ENCODE measurements at regions of chr19 and their contacts with region 1.

Region 1: DNA sequence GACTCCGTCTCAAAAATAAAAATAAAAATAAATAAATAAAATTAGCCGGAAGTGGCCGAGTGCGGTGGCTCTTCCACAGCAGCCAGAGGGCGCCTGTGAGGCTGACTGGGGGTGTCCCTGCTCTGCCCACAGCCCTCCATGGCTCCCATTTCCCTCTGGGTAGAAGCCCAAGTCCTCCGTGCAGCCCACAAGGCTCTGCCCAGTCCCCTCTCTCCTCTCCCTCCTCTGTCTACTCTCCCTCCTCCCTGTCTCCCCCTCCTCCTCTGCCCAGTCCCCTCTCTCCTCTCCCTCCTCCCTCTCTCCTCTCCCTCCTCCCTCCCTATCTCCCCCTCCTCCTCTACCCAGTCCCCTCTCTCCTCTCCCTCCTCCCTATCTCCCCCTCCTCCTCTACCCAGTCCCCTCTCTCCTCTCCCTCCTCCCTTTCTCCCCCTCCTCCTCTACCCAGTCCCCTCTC is 20.4 kb downstream of the MISP start:
- DNase-seq: peak; percentile 73
- ATAC-seq: peak; percentile 76
- H3K4me3 Mint-ChIP-seq: no peak overlapping the region
- H3K27ac Mint-ChIP-seq: no peak overlapping the region
- H3K4me1 Mint-ChIP-seq: peaks cover 2% of the 10 kb centered on the region
- H3K27me3 Mint-ChIP-seq: no peaks in the 10 kb centered on the region

Region 2: DNA sequence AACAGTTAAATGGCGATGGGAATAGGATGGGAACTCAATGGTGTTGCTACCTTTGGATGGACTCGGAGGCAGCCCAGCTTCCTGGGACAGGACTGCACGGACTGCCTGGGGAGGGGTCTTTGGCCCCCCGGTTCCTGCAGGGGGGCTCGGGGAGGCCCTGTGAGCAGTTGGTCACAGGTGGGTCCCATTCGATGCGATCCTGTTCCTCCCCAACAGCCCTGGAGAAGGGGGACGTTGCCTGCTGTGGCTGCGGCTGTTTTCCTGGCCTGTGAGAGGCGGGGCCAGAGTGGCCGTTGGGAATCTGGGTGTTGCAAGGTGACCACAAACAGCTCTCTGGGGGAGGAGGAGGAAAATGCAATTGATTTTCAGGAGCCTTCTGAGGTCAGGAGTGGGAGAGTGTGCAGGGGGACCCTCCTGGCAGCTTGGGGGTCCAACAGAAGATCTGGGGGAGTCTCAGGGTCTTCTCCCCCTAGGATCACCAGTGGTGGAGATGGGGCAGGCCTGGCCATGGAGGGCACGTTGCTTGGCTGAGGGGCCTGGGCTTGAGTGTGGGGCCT is 52.3 kb after region 1 on chr19:
- CTCF ChIA-PET with region 1: no interaction called
- POLR2A ChIA-PET with region 1: no interaction called
- intact Hi-C with region 1: no loop called
- DNase-seq: no peak
- ATAC-seq: no peak
- H3K4me3 Mint-ChIP-seq: no peak overlapping the region
- H3K27ac Mint-ChIP-seq: no peak overlapping the region
- H3K4me1 Mint-ChIP-seq: no peaks in the 10 kb centered on the region
- H3K27me3 Mint-ChIP-seq: peaks cover 13% of the 10 kb centered on the region

Region 3: GRCh38 chr19:843180-843835 is 71.9 kb after region 1 on chr19:
- CTCF ChIA-PET with region 1: no interaction called
- POLR2A ChIA-PET with region 1: no interaction called
- intact Hi-C with region 1: loop called in 1 of 2 experiments (anchors 5 kb)
- DNase-seq: no peak
- ATAC-seq: no peak
- H3K4me3 Mint-ChIP-seq: no peak overlapping the region
- H3K27ac Mint-ChIP-seq: no peak overlapping the region
- H3K4me1 Mint-ChIP-seq: peaks cover 3% of the 10 kb centered on the region
- H3K27me3 Mint-ChIP-seq: peaks cover 25% of the 10 kb centered on the region

Region 4: DNA sequence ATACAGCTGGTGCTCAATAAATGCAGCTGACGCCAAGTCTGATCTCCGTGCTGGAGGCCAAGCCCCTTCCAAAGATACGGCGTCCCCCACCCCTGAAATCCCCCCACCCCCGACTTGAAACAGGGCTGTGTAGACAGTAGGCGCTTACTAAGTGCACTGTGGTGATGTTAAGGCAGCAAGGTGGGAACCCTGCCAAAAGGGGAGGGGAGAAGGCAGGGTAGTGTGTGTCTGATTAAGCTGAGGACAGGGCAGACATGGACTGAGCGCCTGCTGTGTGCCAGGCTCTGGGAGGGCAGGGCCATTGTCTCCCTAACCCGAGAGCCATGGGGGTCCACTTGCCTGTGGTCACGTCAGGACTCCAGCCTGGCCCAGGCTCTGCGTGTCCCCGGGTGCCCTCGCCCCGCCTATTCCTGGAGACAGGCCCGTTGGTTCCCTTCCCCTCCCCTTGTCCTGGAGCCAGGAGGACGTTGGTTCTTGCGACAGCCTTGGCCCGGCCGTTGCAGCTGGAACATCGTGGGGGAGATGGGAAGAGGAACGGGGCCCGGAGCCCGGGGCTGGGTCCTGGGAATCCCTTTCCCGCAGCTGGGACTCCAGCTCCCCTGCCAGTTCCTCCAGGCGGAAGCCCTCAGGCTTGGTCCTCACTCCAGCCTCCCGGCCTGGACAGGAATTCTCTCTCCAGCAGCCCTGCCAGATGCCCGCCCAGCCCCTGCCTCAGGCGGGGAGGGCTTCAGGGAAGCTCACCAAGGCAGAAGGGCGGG is 79.0 kb after region 1 on chr19:
- CTCF ChIA-PET with region 1: no interaction called
- POLR2A ChIA-PET with region 1: no interaction called
- intact Hi-C with region 1: loop called in 1 of 2 experiments (anchors 10 kb)
- DNase-seq: peak; percentile 53
- ATAC-seq: no peak
- H3K4me3 Mint-ChIP-seq: no peak overlapping the region
- H3K27ac Mint-ChIP-seq: no peak overlapping the region
- H3K4me1 Mint-ChIP-seq: no peaks in the 10 kb centered on the region
- H3K27me3 Mint-ChIP-seq: peaks cover 24% of the 10 kb centered on the region

Region 5: DNA sequence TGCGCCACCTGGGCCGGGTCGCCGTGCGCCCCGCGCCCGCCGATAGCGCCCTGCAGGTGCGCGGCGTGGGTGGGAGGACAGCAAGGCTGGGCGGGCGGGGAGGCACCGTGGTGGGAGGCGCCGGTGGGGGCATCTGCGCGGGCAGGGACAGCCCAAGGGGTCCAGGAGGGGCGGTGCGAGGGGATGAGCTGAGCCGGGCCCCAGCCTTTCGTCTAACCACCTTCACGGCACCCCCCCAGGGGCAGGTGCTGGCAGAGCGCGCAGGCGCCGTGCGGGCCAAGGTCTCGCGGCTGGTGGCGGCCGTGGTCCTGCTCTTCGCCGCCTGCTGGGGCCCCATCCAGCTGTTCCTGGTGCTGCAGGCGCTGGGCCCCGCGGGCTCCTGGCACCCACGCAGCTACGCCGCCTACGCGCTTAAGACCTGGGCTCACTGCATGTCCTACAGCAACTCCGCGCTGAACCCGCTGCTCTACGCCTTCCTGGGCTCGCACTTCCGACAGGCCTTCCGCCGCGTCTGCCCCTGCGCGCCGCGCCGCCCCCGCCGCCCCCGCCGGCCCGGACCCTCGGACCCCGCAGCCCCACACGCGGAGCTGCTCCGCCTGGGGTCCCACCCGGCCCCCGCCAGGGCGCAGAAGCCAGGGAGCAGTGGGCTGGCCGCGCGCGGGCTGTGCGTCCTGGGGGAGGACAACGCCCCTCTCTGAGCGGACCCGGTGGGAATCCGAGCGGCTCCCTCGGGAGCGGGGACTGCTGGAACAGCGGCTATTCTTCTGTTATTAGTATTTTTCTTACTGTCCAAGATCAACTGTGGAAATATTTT is 148.9 kb after region 1 on chr19:
- CTCF ChIA-PET with region 1: interaction called, 3 read pairs
- POLR2A ChIA-PET with region 1: no interaction called
- intact Hi-C with region 1: loop called (anchors 1 to 2 kb)
- DNase-seq: peak; percentile 86
- ATAC-seq: peak; percentile 36
- H3K4me3 Mint-ChIP-seq: peak overlapping the region; percentile 80
- H3K27ac Mint-ChIP-seq: peak overlapping the region; percentile 90
- H3K4me1 Mint-ChIP-seq: peaks cover 21% of the 10 kb centered on the region
- H3K27me3 Mint-ChIP-seq: no peaks in the 10 kb centered on the region

Region 6: DNA sequence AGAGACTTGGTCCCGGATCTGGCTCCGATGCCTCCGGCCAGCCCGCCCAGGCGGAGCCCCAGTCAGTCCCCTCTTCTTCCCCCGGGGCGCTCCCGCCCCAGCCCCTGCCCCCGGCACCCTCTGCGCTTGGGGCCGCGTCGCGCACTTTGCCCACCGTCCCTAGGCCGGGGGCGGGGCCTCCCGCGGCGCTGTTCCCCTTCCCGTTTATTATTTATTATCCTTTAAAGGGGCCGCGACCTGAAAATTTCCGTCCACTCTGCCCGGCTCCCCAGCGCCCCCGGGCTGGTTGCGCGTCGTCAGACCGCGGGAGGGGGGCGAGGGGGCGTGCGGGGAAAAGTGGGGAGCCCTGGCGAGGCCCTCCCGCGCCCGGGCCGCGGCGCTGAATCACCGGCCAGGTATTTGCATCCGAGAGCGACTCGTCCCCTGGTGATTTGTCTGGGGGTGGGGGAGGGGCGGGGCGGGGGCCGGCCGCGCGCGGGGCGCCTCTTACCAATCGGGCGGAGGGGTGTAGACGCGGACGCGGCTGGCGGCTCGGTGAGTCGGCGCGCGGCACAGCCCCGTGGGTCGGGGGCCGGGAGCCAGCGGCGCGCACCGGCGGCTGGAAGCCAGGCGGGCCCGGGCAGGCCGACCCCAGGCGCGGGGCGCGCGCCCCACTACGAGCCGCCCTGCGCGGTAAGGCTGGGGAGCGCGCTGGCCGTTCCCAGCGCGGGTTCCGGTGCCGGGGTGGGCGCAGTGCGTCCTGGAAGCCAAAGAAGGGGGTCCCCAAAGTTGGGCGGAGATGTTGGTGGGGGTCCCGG is 154.4 kb after region 1 on chr19 and contains the start of gene ARID3A:
- CTCF ChIA-PET with region 1: interaction called, 3 read pairs
- POLR2A ChIA-PET with region 1: no interaction called
- intact Hi-C with region 1: loop called (anchors 1 to 2 kb)
- DNase-seq: peak; percentile 85
- ATAC-seq: peak; percentile 42
- H3K4me3 Mint-ChIP-seq: peak within 1 kb of the TSS; percentile 70
- H3K27ac Mint-ChIP-seq: peak within 1 kb of the TSS; percentile 37
- H3K4me1 Mint-ChIP-seq: peaks cover 17% of the 10 kb centered on the region
- H3K27me3 Mint-ChIP-seq: no peaks in the 10 kb centered on the region
- total RNA-seq, gene ARID3A: 25.1 to 36.0 TPM

Region 7: DNA sequence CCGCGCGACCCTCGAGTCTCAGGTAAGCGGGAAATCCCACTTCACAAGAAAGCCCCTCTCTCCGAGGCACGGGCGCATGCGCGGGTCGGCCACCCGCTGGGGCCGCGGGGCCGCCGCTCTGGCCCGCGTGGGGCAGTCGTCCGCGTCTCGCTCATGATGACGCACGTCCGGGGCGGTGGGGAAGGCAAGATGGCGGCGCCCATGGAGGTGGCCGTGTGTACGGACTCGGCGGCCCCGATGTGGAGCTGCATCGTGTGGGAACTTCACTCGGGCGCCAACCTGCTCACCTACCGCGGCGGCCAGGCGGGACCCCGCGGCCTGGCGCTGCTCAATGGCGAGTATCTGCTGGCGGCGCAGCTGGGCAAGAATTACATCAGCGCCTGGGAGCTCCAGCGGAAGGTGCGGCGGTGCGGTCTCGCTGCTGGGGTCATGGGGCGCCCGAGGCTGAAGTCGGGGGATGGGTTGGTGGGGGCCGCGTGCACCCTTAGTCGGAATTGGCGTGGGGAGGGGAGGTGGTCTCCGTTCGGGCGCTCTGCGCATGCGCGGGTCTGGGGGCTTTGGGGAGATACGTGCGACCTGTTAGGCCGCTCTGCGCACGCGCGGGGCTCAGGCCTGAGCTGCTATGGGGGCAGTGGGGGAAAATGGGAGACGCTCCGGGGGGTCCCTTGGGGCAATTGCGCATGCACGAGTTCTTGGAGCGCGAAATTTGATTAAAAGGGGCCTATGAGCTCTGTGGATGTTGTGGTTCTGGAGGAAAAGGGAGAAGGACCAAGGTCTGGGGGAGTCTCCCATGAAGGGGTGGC is 213.0 kb after region 1 on chr19 and contains the start of gene WDR18:
- CTCF ChIA-PET with region 1: interaction called, 5 read pairs
- POLR2A ChIA-PET with region 1: no interaction called
- intact Hi-C with region 1: loop called (anchors 1 to 5 kb)
- DNase-seq: peak; percentile 95
- ATAC-seq: peak; percentile 92
- H3K4me3 Mint-ChIP-seq: peak within 1 kb of the TSS; percentile 91
- H3K27ac Mint-ChIP-seq: peak within 1 kb of the TSS; percentile 86
- H3K4me1 Mint-ChIP-seq: peaks cover 14% of the 10 kb centered on the region
- H3K27me3 Mint-ChIP-seq: no peaks in the 10 kb centered on the region
- total RNA-seq, gene WDR18: 71.6 to 87.8 TPM

Region 8: DNA sequence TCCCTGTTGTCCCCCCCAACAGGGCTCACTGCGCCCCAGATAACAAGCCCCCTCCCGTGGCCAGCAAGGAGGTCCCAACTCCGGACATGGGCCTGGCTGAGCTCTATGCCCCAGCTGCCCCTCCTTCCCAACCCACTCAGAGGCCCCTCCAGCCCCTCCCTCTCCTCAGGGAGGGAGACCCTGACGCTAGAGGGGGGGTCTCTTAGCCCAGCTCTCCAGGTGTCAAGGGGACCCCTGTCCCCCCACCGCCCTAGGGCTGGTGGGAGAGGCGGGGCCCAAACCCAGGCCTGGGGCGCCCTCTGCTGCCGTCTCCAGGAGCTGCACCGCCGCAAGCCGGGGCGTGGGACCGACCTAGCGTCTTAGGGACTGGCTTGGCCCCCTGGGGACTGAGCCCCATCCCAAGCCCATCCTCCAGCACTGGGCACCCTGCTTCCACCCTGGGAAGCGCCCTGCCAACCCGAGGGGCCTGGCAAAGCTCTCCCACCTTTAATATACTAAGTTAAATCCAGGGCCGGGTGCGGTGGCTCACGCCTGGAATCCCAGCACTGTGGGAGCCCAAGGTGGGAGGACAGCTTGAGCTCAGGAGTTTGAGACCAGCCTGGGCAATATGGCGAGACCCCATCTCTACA is 230.3 kb after region 1 on chr19:
- CTCF ChIA-PET with region 1: no interaction called
- POLR2A ChIA-PET with region 1: no interaction called
- intact Hi-C with region 1: loop called in 1 of 2 experiments (anchors 1 kb)
- DNase-seq: peak; percentile 84
- ATAC-seq: peak; percentile 77
- H3K4me3 Mint-ChIP-seq: no peak overlapping the region
- H3K27ac Mint-ChIP-seq: no peak overlapping the region
- H3K4me1 Mint-ChIP-seq: peaks cover 5% of the 10 kb centered on the region
- H3K27me3 Mint-ChIP-seq: peaks cover 19% of the 10 kb centered on the region